ENCODE measurements at regions of chr11 and their contacts with region 1.

Region 1: DNA sequence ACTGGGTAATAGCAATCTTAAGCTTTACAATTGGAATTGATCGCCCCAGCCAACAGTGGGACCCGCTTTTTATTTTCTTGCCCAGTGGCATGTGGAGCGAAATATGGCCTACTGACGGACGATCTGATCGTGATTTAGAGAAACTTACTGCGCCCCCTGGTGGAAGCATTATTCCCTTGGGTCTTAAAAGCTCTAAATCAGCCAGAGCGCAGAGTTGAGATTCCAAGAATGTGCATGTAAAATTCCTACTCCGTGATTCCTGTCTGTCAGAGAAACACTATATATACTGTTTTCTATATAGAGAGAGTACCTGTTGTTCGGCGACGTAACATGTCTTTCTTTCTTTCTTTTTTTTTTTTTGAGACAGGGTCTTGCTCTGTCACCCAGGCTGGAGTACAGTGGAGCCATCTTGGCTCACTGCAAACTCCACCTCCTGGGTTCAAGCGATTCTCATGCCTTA is 3.7 kb upstream of the DPF2 start:
- DNase-seq: peak; percentile 60 to 85 (median 76)
- H3K4me3 ChIP-seq: no peak overlapping the region
- H3K4me3 Mint-ChIP-seq: peak overlapping the region in 2 of 7 donors; percentile 27 to 76
- H3K27ac ChIP-seq: no peak overlapping the region
- H3K27ac Mint-ChIP-seq: peak overlapping the region in 5 of 8 donors; percentile 33 to 92 (median 63)
- H3K4me1 ChIP-seq: peaks cover 8% of the 10 kb centered on the region
- H3K4me1 Mint-ChIP-seq: peaks cover 17 to 20% (median 18%) of the 10 kb centered on the region in 3 donors
- H3K27me3 ChIP-seq: no peaks in the 10 kb centered on the region
- H3K27me3 Mint-ChIP-seq: peaks cover 0 to 8% of the 10 kb centered on the region in 2 donors

Region 2: DNA sequence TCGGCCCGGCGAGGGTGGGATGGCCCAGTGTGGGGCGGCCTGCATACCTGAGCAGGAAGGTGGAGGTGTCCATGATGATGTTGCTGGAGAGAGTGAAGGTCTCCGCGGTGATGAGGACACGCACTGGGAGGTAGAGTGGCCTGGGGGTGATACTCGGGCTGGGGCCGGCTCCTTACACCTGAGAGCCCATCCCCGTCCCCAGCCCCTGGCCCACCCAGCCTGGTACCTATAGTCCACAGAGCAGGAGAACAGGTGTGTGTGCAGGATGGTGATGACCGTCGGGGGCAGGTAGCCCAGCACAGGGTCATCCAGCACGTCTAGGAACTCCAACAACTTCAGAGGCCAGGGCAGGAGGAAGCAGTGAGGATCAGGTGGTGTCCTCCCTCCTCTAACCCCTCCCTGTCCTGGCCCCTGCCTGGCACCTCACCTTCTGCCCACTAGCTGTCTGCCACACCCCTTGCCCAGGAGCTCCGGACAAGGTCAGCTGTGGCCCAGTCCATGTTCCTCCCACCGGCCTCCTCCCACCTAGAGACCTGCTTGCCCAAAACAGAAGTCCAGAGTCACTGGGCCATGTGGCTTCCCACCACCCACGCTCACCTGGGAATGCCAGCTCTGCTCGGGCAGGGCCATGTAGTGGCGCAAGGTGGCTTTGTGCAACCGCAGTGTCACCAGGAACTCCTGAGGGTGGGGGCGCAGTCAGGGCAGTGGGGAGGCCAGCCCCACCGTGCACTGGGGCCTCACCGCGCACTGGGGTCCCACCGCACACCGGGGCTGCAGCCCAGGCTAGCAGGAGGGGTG is 424.3 kb before region 1 on chr11:
- CTCF ChIA-PET with region 1: no interaction called
- POLR2A ChIA-PET with region 1: no interaction called
- DNase-seq: no peak
- H3K4me3 ChIP-seq: no peak overlapping the region
- H3K4me3 Mint-ChIP-seq: no peak overlapping the region
- H3K27ac ChIP-seq: no peak overlapping the region
- H3K27ac Mint-ChIP-seq: no peak overlapping the region
- H3K4me1 ChIP-seq: peaks cover 1% of the 10 kb centered on the region
- H3K4me1 Mint-ChIP-seq: peaks cover 0 to 6% (median 4%) of the 10 kb centered on the region in 3 donors
- H3K27me3 ChIP-seq: no peaks in the 10 kb centered on the region
- H3K27me3 Mint-ChIP-seq: no peaks in the 10 kb centered on the region

Region 3: DNA sequence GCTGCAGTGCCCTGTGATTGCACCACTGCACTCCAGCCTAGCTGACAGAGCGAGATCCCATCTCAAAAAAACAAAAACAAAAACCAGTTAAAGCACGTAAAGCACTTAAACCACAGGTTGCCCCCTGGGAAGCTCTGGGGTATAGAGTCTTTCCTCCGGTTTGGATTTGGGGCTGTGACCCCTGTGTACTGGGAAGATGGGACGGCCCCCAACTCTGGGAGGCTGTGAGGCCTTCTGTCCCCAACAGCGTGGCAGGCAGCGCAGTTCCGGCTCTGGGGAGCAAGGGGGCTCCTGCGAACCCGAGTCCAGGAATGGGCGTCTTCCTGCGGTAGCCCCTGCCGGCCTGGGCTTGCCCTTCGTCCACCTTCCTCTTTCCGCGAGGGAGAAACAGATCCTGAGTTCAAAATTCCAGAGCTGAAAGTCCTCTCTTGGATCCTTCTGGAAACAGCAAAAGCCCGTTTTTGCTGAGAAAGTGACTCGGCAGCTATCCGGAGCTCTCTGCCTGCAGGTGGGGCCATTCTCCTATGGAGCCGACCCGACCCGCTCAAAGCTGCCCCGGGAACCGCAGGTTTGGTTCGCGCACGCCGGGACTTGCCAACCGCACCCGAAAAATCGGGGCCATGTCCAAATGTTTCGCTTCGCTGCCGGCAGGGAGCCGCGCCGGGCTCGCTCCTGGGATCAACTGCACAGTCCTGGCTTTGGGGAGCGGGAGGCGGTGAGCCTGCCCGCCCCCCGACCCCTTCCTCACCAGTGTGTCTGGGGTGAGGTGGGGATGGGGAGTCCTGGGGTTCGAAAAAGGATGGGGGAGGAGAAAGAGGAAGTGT is 104.5 kb before region 1 on chr11:
- CTCF ChIA-PET with region 1: interaction called, 21 read pairs
- POLR2A ChIA-PET with region 1: no interaction called
- DNase-seq: peak; percentile 42 to 73 (median 46)
- H3K4me3 ChIP-seq: peak overlapping the region; percentile 48
- H3K4me3 Mint-ChIP-seq: peak overlapping the region; percentile 64 to 87 (median 68)
- H3K27ac ChIP-seq: peak overlapping the region; percentile 65
- H3K27ac Mint-ChIP-seq: peak overlapping the region in 1 of 8 donors; percentile 76
- H3K4me1 ChIP-seq: peaks cover 7% of the 10 kb centered on the region
- H3K4me1 Mint-ChIP-seq: peaks cover 7 to 16% (median 12%) of the 10 kb centered on the region in 3 donors
- H3K27me3 ChIP-seq: no peaks in the 10 kb centered on the region
- H3K27me3 Mint-ChIP-seq: peaks cover 22 to 27% of the 10 kb centered on the region in 2 donors

Region 4: DNA sequence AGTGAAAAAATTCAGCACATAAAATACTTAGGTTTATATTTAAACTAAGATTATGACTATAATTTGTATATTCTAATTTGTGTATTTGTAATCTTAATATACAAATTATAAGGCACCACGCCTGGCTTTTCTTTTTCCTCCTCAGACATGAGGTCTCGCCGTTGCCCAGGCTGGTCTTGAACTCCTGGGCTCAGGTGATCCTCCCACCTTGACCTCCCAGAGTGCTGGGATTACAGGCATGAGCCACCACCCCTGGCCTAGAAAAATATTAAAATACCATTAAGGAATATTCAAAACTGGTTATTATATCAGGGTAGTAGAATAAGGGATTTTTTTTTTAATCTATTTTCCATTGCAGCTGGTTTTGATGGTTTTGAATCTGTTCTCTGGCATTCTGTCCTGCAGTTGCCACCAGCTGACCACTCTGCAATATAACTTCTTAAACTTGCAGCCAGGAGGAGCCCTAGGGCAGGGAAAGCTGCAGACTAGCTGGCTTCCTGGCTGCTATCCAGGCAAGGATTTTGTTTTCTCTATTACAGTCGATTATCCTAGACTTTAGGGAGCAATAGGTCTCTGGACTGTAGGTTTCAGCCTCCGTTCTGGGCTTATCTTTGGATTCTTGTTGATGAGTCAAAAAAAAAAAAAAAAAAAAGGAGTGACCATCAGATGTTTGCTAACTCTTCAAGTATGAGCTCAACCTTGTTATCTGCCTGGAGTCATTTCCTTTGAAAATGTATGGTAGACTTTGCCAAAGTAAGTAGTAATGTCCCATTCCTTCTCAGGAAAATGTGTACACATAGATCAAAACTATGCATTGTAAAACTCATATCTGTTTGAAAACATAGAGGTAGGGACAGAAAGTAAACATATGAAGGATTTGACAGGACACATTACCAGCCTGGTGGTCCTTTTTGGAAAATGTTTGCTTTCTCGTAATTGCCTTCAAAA is 55.0 kb before region 1 on chr11:
- CTCF ChIA-PET with region 1: interaction called, 37 read pairs
- POLR2A ChIA-PET with region 1: no interaction called
- DNase-seq: peak in 4 of 5 donors; percentile 4 to 56 (median 18)
- H3K4me3 ChIP-seq: no peak overlapping the region
- H3K4me3 Mint-ChIP-seq: no peak overlapping the region
- H3K27ac ChIP-seq: no peak overlapping the region
- H3K27ac Mint-ChIP-seq: peak overlapping the region in 1 of 8 donors; percentile 4
- H3K4me1 ChIP-seq: no peaks in the 10 kb centered on the region
- H3K4me1 Mint-ChIP-seq: peaks cover 3 to 10% (median 9%) of the 10 kb centered on the region in 3 donors
- H3K27me3 ChIP-seq: no peaks in the 10 kb centered on the region
- H3K27me3 Mint-ChIP-seq: no peaks in the 10 kb centered on the region